WTC11 (cell line): ENCODE measurements at regions of chr7 and their contacts with region 1.

Region 1: DNA sequence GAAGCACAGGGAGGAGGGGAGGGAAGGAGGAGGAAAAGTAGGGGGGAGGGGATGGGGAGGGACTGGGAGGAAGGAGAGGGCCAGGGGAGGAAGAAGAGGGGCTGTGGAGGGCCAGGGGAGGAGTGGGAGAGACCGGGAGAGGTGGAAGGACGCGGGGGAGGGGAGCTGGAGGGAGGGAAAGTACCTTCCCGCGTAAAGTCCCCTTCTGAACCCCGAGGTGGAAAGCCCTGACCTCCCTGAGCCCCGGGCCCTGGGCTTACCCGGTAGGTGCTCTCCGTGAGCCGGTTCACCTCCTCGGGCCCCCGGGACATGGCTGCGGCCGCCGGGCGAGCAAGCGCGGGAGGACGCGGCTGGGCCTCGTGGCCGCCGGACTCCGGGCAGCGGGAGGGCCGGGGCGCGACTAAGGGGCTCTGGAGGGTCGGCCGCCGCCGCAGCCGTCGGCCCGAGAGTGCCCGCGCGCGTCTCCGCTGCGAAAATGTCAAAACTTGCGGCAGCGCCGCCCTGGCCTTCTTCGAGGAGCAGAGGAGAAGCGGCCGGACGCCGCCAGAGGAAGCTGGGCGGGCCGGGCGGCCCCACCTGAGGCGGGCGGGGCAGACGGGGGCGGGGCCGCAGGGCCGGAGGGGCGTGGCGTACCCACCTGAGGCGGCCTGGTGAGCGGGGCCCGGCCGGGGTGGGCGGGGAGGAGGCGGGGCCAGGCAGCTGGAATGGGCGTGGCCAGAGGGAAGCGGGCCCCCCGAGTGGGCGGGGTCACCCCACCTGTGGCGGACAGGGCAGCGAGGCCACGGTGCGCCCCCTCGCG is at the start of gene BAIAP2L1:
- DNase-seq: peak; percentile 98
- ATAC-seq: peak; percentile 91
- H3K4me3 Mint-ChIP-seq: peak within 1 kb of the TSS; percentile 84
- H3K27ac Mint-ChIP-seq: peak within 1 kb of the TSS; percentile 97
- H3K4me1 Mint-ChIP-seq: peaks cover 36% of the 10 kb centered on the region
- H3K27me3 Mint-ChIP-seq: no peaks in the 10 kb centered on the region; the same call in 1 of the 2 replicates
- CTCF ChIP-seq: peak; percentile 57; the same call in 1 of the 2 replicates
- total RNA-seq, gene BAIAP2L1: 35.5 to 37.5 TPM (median 36.8 TPM) in 3 replicates

Region 2: DNA sequence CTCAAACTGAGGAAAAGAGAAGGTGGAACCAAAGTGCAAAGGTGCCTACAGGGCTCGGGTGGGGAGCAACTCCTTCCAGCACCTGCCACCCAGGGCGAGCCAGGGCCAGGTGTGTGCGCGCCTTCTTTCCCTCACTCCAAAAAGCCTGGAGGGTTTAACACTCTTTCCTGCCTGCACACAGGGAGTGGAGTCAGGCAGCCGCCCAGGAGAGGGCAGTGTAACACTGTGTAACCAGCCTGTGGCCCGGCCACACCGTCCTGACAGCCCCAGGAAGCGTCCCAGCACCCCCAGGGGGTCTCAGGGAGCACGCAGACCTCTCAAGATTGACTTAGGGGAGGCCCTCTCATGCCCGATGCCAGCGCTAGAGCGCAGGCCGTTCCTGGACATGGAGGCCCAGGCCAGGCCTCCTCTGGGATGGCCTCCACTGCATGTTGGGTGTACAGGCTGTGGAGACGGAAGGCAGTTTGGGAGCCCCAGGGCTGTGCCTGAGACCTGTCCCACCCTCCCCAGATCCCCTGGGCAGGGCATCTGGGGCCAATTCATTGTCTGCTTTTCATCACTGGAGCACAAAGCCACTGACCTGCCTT is 105.9 kb before region 1 on chr7:
- CTCF ChIA-PET with region 1: interaction called, 34 read pairs
- POLR2A ChIA-PET with region 1: interaction called, 4 read pairs
- DNase-seq: peak; percentile 87
- ATAC-seq: peak; percentile 89
- H3K4me3 Mint-ChIP-seq: no peak overlapping the region
- H3K27ac Mint-ChIP-seq: peak overlapping the region; percentile 89; the same call in 1 of the 2 replicates
- H3K4me1 Mint-ChIP-seq: peaks cover 22% of the 10 kb centered on the region
- H3K27me3 Mint-ChIP-seq: no peaks in the 10 kb centered on the region
- CTCF ChIP-seq: peak; percentile 71

Region 3: GRCh38 chr7:98323597-98324322 is 77.0 kb before region 1 on chr7:
- CTCF ChIA-PET with region 1: interaction called, 29 read pairs
- POLR2A ChIA-PET with region 1: interaction called, 9 read pairs
- DNase-seq: peak; percentile 76
- ATAC-seq: peak; percentile 89
- H3K4me3 Mint-ChIP-seq: peak overlapping the region; percentile 54
- H3K27ac Mint-ChIP-seq: peak overlapping the region; percentile 96
- H3K4me1 Mint-ChIP-seq: peaks cover 21% of the 10 kb centered on the region
- H3K27me3 Mint-ChIP-seq: no peaks in the 10 kb centered on the region
- CTCF ChIP-seq: no peak

Region 4: DNA sequence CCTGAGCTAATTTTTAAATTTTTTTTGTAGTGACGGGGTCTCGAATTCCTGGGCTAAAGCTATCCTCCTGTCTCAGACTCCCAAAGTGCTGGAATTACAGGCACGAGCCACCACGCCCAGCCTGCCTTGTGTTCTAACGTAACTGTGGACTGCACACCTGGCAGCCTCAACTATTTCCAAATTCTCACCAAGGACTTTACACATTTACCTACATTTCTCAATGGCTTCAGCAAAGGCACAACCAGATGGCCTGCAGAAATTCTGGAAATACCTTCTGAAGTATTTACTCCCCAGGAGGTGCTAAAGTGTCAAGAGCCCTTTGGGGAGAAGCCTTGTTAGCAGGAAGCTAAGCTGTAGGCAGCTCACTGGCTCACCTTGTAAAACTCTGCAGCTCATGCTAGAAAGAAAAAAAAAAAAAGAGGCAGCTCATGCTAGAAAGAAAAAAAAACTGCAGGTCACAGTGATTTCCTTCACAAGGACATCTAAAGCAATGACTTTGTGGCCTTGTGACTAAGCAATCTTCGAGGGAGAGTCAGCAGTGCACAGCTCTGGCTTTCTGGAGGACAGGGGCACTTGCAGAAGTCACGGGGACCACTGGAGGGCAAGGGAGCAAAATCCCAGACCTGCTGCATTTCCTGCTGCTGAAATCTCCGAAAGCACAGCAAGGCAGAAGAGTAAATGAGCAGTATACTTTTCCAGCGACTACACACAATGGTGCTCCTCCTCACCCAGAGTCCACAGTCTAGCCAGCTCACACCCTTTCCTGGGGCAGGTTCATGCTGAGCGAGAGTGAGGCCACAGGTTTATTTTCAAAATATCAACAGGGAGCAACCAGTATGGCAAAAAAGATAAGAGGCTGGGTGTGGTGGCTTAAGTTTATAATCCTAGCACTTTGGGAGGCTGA is 40.3 kb before region 1 on chr7:
- CTCF ChIA-PET with region 1: interaction called, 32 read pairs
- POLR2A ChIA-PET with region 1: interaction called, 3 read pairs
- DNase-seq: peak; percentile 36
- ATAC-seq: peak; percentile 80
- H3K4me3 Mint-ChIP-seq: no peak overlapping the region
- H3K27ac Mint-ChIP-seq: peak overlapping the region; percentile 93
- H3K4me1 Mint-ChIP-seq: peaks cover 34% of the 10 kb centered on the region
- H3K27me3 Mint-ChIP-seq: no peaks in the 10 kb centered on the region
- CTCF ChIP-seq: no peak

Region 5: DNA sequence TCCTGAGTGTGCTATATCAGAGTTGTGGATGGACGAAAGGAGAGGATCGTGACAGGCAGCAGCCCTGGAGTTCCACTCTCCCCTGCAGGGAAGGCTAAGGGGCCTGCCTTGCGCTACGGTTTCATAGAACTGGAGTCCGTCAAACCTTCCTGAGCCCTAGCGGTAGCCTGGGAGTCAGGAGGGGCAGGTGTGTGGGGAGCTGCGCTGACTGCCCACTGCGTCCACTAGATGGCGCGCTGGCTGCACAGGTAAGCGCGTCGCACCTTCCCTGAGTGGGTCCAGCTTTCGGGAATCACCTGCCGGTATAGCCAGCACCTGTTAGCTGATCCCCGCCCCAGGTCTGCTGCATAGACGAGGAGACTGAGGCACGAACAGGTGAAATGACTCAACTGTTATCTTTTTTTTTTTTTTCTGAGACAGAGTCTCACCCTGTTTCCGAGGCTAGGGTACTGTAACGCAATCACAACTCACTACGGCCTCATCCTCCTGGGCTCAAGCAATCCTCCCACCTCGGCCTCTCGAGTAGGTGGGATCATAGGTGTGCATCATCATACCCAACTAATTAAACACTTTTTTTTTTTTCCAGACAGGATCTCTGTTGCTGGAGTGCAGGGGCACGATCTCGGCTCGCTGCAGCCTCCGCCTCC is 20.3 kb after region 1 on chr7:
- CTCF ChIA-PET with region 1: interaction called, 11 read pairs
- POLR2A ChIA-PET with region 1: interaction called, 3 read pairs
- DNase-seq: peak; percentile 93
- ATAC-seq: peak; percentile 99
- H3K4me3 Mint-ChIP-seq: no peak overlapping the region
- H3K27ac Mint-ChIP-seq: no peak overlapping the region
- H3K4me1 Mint-ChIP-seq: no peaks in the 10 kb centered on the region
- H3K27me3 Mint-ChIP-seq: peaks cover 13% of the 10 kb centered on the region
- CTCF ChIP-seq: peak; percentile 92